ENCODE measurements at regions of chr1 and their contacts with region 1.

Region 1: GRCh38 chr1:26284597-26285360 is 4.9 kb downstream of the SH3BGRL3 start:
- DNase-seq: peak; percentile 91
- ATAC-seq: peak; percentile 68
- H3K4me3 ChIP-seq: peak overlapping the region in 1 of 2 experiments; percentile 31; a peak in 2 of 4 replicates
- H3K27ac ChIP-seq: peak overlapping the region; percentile 58
- H3K4me1 ChIP-seq: peaks cover 25 to 67% of the 10 kb centered on the region in 2 experiments
- H3K27me3 ChIP-seq: no peaks in the 10 kb centered on the region
- CTCF ChIP-seq: peak in 2 of 3 experiments; percentile 87; a peak in 4 of 6 replicates
- POLR2A ChIP-seq: no peak
- RAD21 ChIP-seq: no peak

Region 2: DNA sequence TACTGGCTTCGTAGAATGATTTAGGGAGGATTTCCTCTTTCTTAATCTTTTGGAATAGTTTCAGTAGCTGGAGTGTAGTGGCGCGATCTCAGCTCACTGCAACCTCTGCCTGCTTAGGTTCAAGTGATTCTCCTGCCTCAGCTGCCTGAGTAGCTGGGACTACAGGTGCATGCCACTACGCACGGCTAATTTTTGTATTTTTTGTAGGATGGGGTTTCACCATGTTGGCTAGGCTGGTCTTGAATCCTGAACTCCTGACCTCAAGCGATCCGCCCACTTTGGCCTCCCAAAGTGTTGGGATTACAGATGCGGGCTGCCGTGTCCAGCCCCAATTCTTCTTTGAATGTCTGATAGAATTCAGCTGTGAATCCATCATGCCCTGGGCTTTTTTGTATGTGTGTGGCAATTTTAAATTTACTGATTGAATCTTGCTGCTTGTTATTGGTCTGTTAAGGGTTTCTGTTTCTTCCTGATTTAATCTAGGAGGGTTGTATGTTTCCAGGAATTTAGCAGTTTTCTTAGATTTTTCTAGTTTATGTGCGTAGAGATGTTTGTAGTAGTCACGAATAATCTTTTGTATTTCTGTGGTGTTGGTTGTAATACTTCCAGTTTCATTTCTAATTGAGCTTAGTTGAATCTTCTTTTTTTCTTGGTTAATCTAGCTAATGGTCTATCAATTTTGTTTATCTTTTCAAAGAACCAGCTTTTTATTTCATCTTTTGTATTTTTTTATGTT is 652.9 kb before region 1 on chr1:
- CTCF ChIA-PET with region 1: no interaction called
- POLR2A ChIA-PET with region 1: no interaction called
- RAD21 ChIA-PET with region 1: no interaction called
- intact Hi-C with region 1: no loop called
- DNase-seq: no peak
- ATAC-seq: no peak
- H3K4me3 ChIP-seq: no peak overlapping the region
- H3K27ac ChIP-seq: no peak overlapping the region
- H3K4me1 ChIP-seq: no peaks in the 10 kb centered on the region
- H3K27me3 ChIP-seq: 0 out of 2 replicates have a peak, but pooled peaks cover 3% of the 10 kb centered on the region
- CTCF ChIP-seq: no peak
- POLR2A ChIP-seq: no peak
- RAD21 ChIP-seq: no peak

Region 3: DNA sequence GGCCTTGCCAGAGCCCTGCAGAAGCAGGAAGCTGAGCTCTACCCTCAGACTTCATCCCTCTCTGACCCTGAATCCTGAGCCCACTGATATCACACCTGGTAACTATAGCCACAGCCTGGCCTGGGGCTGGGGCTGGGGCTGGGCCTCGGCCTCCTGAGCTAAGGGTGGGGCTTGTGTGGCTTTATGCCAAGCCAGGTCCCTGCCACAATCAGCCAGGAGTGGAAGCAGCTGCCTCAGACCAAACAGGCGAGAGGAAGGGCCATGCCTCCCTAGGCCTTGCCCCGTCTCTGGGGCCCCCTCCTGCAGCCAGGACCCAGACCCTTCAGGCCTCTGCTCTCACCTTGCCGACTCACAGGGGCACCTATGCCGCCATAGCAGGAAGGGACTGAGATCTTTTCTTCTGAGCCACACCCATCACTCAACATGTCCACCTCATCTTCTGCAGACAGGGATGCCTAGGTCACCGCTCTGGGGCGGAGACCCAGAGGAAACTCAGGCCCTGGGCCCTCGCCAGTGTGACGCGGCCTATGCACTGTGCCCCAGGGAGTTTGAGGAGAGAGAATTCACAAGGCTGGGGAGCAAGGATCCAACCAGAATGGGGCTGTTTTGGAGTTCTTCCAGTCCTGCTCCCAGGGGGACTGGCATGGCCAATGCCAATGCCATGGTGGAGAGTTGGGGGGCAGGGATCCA is 16.0 kb after region 1 on chr1:
- CTCF ChIA-PET with region 1: interaction called, 10 read pairs
- POLR2A ChIA-PET with region 1: no interaction called
- RAD21 ChIA-PET with region 1: no interaction called
- intact Hi-C with region 1: no loop called
- DNase-seq: no peak
- ATAC-seq: no peak
- H3K4me3 ChIP-seq: no peak overlapping the region
- H3K27ac ChIP-seq: no peak overlapping the region
- H3K4me1 ChIP-seq: peaks cover 5 to 31% of the 10 kb centered on the region in 2 experiments; a peak in 2 of 4 replicates
- H3K27me3 ChIP-seq: no peaks in the 10 kb centered on the region
- CTCF ChIP-seq: no peak
- POLR2A ChIP-seq: no peak
- RAD21 ChIP-seq: no peak

Region 4: DNA sequence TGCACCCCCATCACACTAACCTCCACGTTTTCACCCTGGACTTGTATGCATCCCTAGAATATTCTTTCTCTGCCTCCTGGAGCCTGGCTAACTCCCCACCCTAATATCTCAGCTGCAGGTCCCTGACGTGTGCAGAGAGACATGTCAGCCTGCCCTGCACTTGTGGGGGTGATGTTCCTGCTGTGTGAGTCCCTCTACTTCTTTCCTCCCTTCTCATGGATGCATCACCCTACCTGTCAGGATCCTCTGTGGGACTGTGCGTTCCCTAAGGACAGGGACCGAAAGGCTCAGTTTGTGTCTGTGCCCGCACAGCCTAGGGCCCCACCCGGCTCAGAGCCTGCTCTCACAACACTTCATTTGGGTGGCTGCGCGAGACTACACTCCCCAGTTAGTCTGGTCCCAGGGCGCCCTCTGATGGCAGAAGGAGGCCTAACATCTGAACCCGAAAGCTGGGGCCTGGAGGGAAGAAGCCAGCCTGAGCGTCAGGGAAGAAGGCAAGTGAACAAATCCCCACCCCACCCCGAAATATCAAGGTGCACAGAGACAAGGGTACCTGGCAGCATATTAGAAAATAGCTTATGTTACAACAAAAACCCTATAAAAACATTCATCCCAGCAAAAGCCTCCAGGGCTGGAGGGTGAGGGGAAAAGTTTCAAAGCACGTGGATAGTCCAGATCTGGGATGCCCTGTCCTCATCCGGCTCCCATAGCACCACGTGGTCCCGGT is 36.7 kb after region 1 on chr1:
- CTCF ChIA-PET with region 1: interaction called, 47 read pairs
- POLR2A ChIA-PET with region 1: interaction called, 4 read pairs
- RAD21 ChIA-PET with region 1: interaction called, 4 read pairs
- intact Hi-C with region 1: loop called (anchors 1 kb)
- DNase-seq: peak; percentile 54
- ATAC-seq: peak; percentile 97
- H3K4me3 ChIP-seq: no peak overlapping the region
- H3K27ac ChIP-seq: no peak overlapping the region
- H3K4me1 ChIP-seq: peaks cover 5 to 16% of the 10 kb centered on the region in 2 experiments; a peak in 3 of 4 replicates
- H3K27me3 ChIP-seq: no peaks in the 10 kb centered on the region
- CTCF ChIP-seq: peak; percentile 83 to 93 (median 92)
- POLR2A ChIP-seq: no peak
- RAD21 ChIP-seq: peak; percentile 97

Region 5: DNA sequence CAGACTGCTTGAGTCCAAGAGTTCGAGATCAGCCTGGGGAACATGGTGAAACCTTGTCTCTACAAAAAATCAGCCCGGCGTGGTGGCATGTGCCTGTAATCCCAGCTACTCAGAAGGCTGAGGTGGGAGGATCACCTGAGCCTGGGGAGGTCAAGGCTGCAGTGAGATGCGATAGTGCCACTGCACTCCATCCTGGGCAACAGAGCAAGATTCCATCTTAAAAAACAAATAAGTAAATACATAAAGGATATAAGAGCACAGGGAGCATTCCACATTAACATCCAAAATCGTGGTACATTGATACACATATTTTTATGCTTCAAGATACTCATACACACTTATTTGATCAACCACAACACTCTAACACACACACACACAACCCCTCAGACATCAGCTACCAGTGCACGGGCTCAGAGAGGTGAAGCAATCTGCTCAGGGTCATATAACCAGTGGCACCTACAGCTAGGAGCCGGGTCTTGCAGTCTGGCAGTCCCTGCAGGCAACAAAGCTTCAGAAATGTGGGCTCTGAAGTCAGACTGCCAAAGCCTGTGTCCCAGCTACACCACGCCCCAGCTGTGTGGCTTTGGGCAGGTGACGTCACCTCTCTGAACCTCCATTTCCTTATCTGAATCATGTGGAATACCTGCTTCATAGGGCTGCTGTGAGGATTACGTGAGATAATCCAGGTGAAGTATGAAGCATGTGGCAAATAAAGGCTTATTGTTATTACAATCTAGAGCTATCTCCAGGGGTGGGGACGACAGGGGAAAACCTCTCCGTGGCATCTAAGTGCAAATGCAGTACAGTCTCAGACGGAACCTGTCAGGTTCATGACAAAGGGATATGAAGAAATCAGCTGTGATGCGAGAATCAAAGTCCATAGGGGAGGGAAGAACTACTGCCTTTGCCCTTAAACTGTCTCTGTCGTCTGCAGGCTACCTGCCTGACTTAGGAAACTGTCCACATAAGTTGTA is 73.9 kb after region 1 on chr1:
- CTCF ChIA-PET with region 1: interaction called, 19 read pairs
- POLR2A ChIA-PET with region 1: no interaction called
- RAD21 ChIA-PET with region 1: no interaction called
- intact Hi-C with region 1: loop called (anchors 1 kb)
- DNase-seq: peak; percentile 51
- ATAC-seq: peak; percentile 41
- H3K4me3 ChIP-seq: peak overlapping the region in 1 of 2 experiments; percentile 16; a peak in 2 of 4 replicates
- H3K27ac ChIP-seq: no peak overlapping the region
- H3K4me1 ChIP-seq: peaks cover 29 to 57% of the 10 kb centered on the region in 2 experiments
- H3K27me3 ChIP-seq: no peaks in the 10 kb centered on the region
- CTCF ChIP-seq: no peak
- POLR2A ChIP-seq: no peak
- RAD21 ChIP-seq: no peak

Region 6: GRCh38 chr1:26363549-26364448 is 79.0 kb after region 1 on chr1:
- CTCF ChIA-PET with region 1: interaction called, 19 read pairs
- POLR2A ChIA-PET with region 1: no interaction called
- RAD21 ChIA-PET with region 1: interaction called in 1 of 2 experiments, 3 read pairs
- intact Hi-C with region 1: loop called (anchors 1 kb)
- DNase-seq: peak; percentile 33
- ATAC-seq: peak; percentile 87
- H3K4me3 ChIP-seq: no peak overlapping the region
- H3K27ac ChIP-seq: no peak overlapping the region
- H3K4me1 ChIP-seq: peaks cover 7 to 21% of the 10 kb centered on the region in 2 experiments; a peak in 3 of 4 replicates
- H3K27me3 ChIP-seq: no peaks in the 10 kb centered on the region
- CTCF ChIP-seq: peak; percentile 89 to 98 (median 98)
- POLR2A ChIP-seq: no peak
- RAD21 ChIP-seq: peak; percentile 89

Region 7: DNA sequence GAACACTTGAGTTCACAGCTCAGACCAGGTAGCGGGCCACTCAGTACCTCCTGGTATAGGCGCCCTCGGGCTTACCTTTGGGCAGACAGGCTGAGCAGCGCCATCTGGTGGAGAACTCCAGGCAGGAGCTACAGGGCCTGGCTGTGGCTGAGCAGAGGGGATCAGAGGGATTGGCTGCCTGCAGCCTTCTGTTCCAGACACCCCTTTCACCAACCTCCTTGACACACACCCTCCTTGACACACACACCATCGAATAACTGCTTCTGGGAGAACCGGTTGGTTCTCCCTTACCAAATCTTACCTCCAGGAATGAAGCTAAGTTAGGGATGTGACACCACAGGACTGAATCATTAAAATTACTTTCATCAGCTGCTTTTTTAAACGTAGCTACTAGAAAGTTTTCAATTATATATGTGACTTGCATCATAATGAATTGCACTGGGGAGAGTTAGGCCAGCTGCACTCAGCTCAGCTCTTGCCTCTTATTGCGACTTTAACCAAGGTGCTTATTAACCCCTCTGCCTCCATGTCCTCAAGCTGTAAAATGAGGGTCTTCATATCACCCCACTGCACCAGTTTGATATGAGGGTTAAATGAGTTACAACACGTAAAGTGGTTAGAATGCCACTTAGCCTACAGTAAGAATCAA is 132.5 kb after region 1 on chr1:
- CTCF ChIA-PET with region 1: interaction called, 50 read pairs
- POLR2A ChIA-PET with region 1: no interaction called
- RAD21 ChIA-PET with region 1: interaction called, 3 to 4 read pairs
- intact Hi-C with region 1: loop called (anchors 2 kb)
- DNase-seq: peak; percentile 80
- ATAC-seq: peak; percentile 100
- H3K4me3 ChIP-seq: no peak overlapping the region
- H3K27ac ChIP-seq: no peak overlapping the region
- H3K4me1 ChIP-seq: peaks cover 0 to 19% of the 10 kb centered on the region in 2 experiments; a peak in 2 of 4 replicates
- H3K27me3 ChIP-seq: no peaks in the 10 kb centered on the region; the same call in 1 of the 2 replicates
- CTCF ChIP-seq: peak; percentile 76 to 95 (median 89)
- POLR2A ChIP-seq: no peak
- RAD21 ChIP-seq: peak; percentile 84

Measured in HCT116 (cell line).